HEK293 (cell line): ENCODE measurements at regions of chr19 and their contacts with region 1.

Region 1: GRCh38 chr19:42283143-42284065 is 14.4 kb downstream of the CIC start:
- H3K4me3 ChIP-seq: peak overlapping the region; percentile 39
- H3K27ac ChIP-seq: peak overlapping the region; percentile 90
- H3K4me1 ChIP-seq: peaks cover 51% of the 10 kb centered on the region
- CTCF ChIP-seq: peak; percentile 84

Region 2: GRCh38 chr19:42254989-42255765 is 28.2 kb before region 1 on chr19 and contains the start of gene ERF:
- CTCF ChIA-PET with region 1: interaction called, 276 read pairs
- POLR2A ChIA-PET with region 1: interaction called, 242 read pairs
- H3K4me3 ChIP-seq: peak within 1 kb of the TSS; percentile 83
- H3K27ac ChIP-seq: peak within 1 kb of the TSS; percentile 99
- H3K4me1 ChIP-seq: peaks cover 34% of the 10 kb centered on the region
- CTCF ChIP-seq: no peak

Region 3: DNA sequence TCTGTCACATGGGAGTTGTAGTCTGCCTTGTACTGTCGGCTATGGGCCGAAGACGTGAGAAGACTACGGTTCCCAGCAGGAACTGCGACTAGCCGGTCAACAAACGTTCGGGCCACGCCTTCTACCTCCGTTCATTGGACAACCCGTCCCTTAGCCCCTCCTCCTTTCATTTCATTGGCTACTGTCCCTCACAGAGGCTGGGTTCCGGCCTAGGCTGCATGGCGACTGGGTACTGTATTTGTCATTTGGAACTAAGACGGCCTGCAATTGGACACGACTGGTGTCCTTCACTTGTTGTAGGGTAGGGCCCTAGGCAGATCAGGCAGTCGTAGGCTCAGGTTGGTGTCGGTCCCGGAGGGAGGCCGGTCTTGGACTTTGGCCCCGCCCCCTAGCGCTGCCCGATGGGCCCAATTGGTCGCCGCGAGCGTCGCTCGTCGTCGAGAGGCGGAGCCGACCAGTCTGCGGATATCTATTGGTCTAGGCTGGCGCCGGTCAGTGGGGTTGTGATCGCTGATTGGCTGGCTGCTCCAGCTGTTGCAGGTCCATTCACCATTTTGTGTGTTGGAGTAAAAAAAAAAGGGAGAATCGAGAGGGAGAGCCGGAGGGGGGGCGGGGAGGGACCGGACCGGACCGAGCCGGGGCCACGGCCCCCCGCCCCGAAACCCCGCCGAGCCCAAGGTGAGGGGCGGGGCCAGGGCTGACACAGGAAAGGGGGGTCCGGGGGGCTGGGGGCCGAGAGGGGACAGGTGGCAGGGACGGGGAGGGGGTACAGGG is 14.5 kb before region 1 on chr19 and contains the start of gene CIC:
- CTCF ChIA-PET with region 1: interaction called, 28 read pairs
- POLR2A ChIA-PET with region 1: interaction called, 11 read pairs
- H3K4me3 ChIP-seq: peak within 1 kb of the TSS; percentile 77
- H3K27ac ChIP-seq: peak within 1 kb of the TSS; percentile 98
- H3K4me1 ChIP-seq: peaks cover 16% of the 10 kb centered on the region
- CTCF ChIP-seq: no peak

Region 4: GRCh38 chr19:42295831-42296525 is 12.6 kb after region 1 on chr19:
- CTCF ChIA-PET with region 1: interaction called, 42 read pairs
- POLR2A ChIA-PET with region 1: interaction called, 4 read pairs
- H3K4me3 ChIP-seq: no peak overlapping the region
- H3K27ac ChIP-seq: no peak overlapping the region
- H3K4me1 ChIP-seq: no peaks in the 10 kb centered on the region
- CTCF ChIP-seq: peak; percentile 95